HepG2 (cell line): ENCODE measurements at regions of chr3 and their contacts with region 1.

Region 1: GRCh38 chr3:191328962-191329653 is at the start of gene CCDC50:
- DNase-seq: peak; percentile 77
- ATAC-seq: peak; percentile 89
- H3K4me3 ChIP-seq: peak within 1 kb of the TSS; percentile 70 to 89 (median 88)
- H3K27ac ChIP-seq: peak within 1 kb of the TSS; percentile 95
- H3K4me1 ChIP-seq: peaks cover 47% of the 10 kb centered on the region
- H3K27me3 ChIP-seq: no peaks in the 10 kb centered on the region
- CTCF ChIP-seq: peak; percentile 40
- EP300 ChIP-seq: peak in 1 of 2 experiments; percentile 69; a peak in 2 of 4 replicates
- POLR2A ChIP-seq: peak; percentile 73 to 80
- RAD21 ChIP-seq: peak; percentile 56
- total RNA-seq, gene CCDC50: 66.4 and 84.6 TPM in 2 replicates

Region 2: DNA sequence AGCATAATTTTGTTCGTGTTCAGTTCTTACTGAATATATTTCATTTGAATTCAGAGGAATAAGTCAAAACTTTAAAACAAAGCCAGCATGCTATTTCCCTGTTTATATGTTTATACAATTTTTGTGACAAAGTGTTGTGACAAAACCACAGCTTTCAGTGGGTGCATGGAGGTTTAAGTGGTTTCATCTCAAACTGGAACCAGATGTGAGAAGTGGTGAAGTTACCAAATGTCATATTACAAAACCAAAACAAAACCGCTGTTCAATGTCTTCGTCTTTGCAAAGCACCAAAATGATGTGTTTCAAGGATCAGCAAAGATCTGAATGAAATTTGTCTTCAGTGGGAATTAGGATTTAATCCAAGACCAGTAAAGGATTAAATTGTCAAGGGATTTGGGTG is 189.4 kb before region 1 on chr3:
- CTCF ChIA-PET with region 1: no interaction called
- POLR2A ChIA-PET with region 1: no interaction called
- in situ Hi-C with region 1: no loop called
- intact Hi-C with region 1: no loop called
- DNase-seq: no peak
- ATAC-seq: no peak
- H3K4me3 ChIP-seq: no peak overlapping the region
- H3K27ac ChIP-seq: no peak overlapping the region
- H3K4me1 ChIP-seq: no peaks in the 10 kb centered on the region
- H3K27me3 ChIP-seq: no peaks in the 10 kb centered on the region; a peak in 1 of 5 replicates
- CTCF ChIP-seq: no peak
- EP300 ChIP-seq: no peak
- POLR2A ChIP-seq: no peak
- RAD21 ChIP-seq: no peak

Region 3: DNA sequence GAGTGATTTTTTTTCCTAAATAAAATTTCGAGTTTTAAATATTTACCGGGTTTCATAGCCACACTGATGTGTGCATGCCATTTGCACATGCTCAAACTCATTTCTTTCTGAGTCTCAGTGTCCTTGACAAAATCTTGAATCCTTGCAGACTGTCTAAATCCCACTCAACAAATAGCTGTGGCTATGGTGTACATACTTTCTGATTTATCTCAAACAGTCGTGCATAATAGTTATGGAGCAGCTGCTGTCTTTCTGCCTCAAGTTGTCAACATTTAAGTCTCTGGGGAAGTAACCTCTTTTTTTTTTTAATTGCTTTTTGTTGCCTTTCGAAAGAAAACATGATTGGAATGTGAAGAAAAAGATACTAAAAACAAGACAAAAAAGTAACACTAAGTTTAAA is 54.0 kb after region 1 on chr3:
- CTCF ChIA-PET with region 1: no interaction called
- POLR2A ChIA-PET with region 1: no interaction called
- in situ Hi-C with region 1: no loop called
- intact Hi-C with region 1: loop called (anchors 5 kb)
- DNase-seq: no peak
- ATAC-seq: no peak
- H3K4me3 ChIP-seq: no peak overlapping the region
- H3K27ac ChIP-seq: no peak overlapping the region
- H3K4me1 ChIP-seq: no peaks in the 10 kb centered on the region
- H3K27me3 ChIP-seq: no peaks in the 10 kb centered on the region
- CTCF ChIP-seq: no peak
- EP300 ChIP-seq: no peak
- POLR2A ChIP-seq: no peak
- RAD21 ChIP-seq: no peak